CD8-positive, alpha-beta T cell (primary cell): ENCODE measurements at regions of chr7 and their contacts with region 1.

Region 1: DNA sequence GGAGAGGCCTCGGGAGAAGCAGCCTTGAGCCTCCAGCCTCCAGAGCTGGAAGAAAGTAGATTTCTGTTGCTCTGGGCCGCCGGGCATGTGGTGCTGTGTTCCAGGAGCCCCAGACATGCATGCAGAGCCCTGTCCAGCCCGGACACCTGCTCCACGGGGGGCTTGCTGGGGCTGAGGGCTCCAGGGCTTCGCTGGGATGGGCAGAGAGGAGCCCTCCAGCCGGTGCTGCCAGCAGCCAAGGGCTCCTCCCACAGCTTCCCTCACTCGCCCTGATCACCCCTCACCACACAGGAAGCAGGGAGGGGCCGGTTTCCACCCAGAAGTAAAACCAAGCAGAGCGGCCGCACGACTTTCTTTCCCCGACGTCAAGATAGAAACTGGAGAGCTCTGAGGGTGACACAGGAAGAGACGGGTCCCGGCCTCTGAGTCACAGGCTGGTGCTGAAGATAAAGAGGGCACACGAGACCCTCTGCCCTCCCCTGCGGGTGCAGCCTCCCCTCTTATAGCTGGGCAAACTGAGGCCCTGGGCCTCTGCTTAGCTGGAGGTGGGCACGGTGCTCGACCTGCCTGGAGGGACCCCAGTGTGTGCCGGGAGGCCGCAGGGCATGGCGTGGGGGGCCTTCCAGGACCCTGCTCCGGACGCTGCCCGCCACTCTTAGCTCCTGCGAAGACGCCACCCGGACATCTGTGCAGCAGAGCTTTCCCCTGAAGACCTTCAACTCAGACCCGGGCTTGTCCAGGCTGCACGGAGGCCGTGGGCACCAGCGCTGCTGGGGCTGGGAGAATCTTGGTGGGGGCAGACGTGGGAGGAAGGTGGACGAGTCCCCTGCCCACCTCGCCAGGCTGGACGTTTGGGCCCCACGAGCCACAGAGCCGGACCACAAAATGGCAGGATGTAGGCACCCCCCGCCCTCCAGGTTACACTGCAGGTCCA is 31.1 kb downstream of the ADAP1 start:
- DNase-seq: peak; percentile 82 to 97 (median 95)
- ATAC-seq: peak; percentile 72
- H3K4me3 ChIP-seq: peak overlapping the region; percentile 72 to 94
- H3K4me3 Mint-ChIP-seq: peak overlapping the region; percentile 86
- H3K27ac ChIP-seq: peak overlapping the region; percentile 83 to 87
- H3K27ac Mint-ChIP-seq: peak overlapping the region; percentile 95
- H3K4me1 ChIP-seq: peaks cover 50% of the 10 kb centered on the region
- H3K4me1 Mint-ChIP-seq: peaks cover 34% of the 10 kb centered on the region
- H3K27me3 ChIP-seq: no peaks in the 10 kb centered on the region
- H3K27me3 Mint-ChIP-seq: no peaks in the 10 kb centered on the region
- CTCF ChIP-seq: no peak

Region 2: GRCh38 chr7:816300-816750 is 107.0 kb before region 1 on chr7:
- CTCF ChIA-PET with region 1: no interaction called
- POLR2A ChIA-PET with region 1: interaction called, 3 read pairs
- intact Hi-C with region 1: loop called in 1 of 2 experiments (anchors 5 kb)
- DNase-seq: peak; percentile 93 to 98 (median 96)
- ATAC-seq: peak; percentile 94
- H3K4me3 ChIP-seq: peak overlapping the region; percentile 40 to 53
- H3K4me3 Mint-ChIP-seq: peak overlapping the region; percentile 61
- H3K27ac ChIP-seq: no peak overlapping the region
- H3K27ac Mint-ChIP-seq: no peak overlapping the region
- H3K4me1 ChIP-seq: peaks cover 34% of the 10 kb centered on the region
- H3K4me1 Mint-ChIP-seq: peaks cover 54% of the 10 kb centered on the region
- H3K27me3 ChIP-seq: no peaks in the 10 kb centered on the region
- H3K27me3 Mint-ChIP-seq: peaks cover 2% of the 10 kb centered on the region
- CTCF ChIP-seq: no peak

Region 3: DNA sequence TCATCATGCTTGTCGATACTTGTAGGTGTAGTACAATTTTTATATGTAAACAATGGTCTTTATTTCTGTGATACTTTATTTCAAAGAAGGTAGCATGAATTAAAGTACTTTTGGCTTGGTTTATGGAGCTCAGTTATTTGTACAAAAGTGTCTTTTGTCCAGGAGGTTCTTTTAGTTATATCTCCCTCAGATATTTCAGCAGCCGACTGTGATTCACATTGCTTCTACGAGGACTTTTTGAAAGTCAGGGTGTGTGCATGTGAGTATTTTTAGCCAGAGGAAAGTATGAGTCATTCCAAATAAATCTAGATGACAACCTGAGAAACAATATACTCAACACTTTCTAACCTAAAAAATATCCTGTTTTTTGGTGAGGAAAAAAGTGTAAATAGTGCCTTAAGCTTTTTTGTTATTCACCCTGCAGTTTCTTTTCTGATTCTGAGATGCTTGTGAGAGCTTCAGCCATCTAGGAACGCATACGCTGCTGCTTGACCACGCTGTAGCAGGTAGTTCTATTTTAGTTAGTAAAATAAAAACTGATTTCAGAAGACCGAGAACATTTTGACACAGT is 91.7 kb before region 1 on chr7:
- CTCF ChIA-PET with region 1: no interaction called
- POLR2A ChIA-PET with region 1: no interaction called
- intact Hi-C with region 1: loop called in 1 of 2 experiments (anchors 5 kb)
- DNase-seq: peak in 3 of 9 experiments; percentile 23 to 61 (median 30)
- ATAC-seq: peak; percentile 15
- H3K4me3 ChIP-seq: no peak overlapping the region
- H3K4me3 Mint-ChIP-seq: peak overlapping the region; percentile 75
- H3K27ac ChIP-seq: peak overlapping the region; percentile 66 to 75
- H3K27ac Mint-ChIP-seq: peak overlapping the region; percentile 92
- H3K4me1 ChIP-seq: peaks cover 27% of the 10 kb centered on the region
- H3K4me1 Mint-ChIP-seq: peaks cover 48% of the 10 kb centered on the region
- H3K27me3 ChIP-seq: no peaks in the 10 kb centered on the region
- H3K27me3 Mint-ChIP-seq: no peaks in the 10 kb centered on the region
- CTCF ChIP-seq: no peak

Region 4: GRCh38 chr7:909358-910329 is 13.7 kb before region 1 on chr7:
- CTCF ChIA-PET with region 1: interaction called, 8 read pairs
- POLR2A ChIA-PET with region 1: interaction called, 29 read pairs
- intact Hi-C with region 1: loop called in 1 of 2 experiments (anchors 1 kb)
- DNase-seq: peak in 6 of 9 experiments; percentile 30 to 64 (median 47)
- ATAC-seq: peak; percentile 19
- H3K4me3 ChIP-seq: peak overlapping the region in 1 of 2 experiments; percentile 48
- H3K4me3 Mint-ChIP-seq: peak overlapping the region; percentile 55
- H3K27ac ChIP-seq: no peak overlapping the region
- H3K27ac Mint-ChIP-seq: peak overlapping the region; percentile 75
- H3K4me1 ChIP-seq: peaks cover 15% of the 10 kb centered on the region
- H3K4me1 Mint-ChIP-seq: peaks cover 9% of the 10 kb centered on the region
- H3K27me3 ChIP-seq: no peaks in the 10 kb centered on the region
- H3K27me3 Mint-ChIP-seq: no peaks in the 10 kb centered on the region
- CTCF ChIP-seq: no peak

Region 5: GRCh38 chr7:954330-955238 is 31.2 kb after region 1 on chr7 and contains the start of gene ADAP1:
- CTCF ChIA-PET with region 1: no interaction called
- POLR2A ChIA-PET with region 1: interaction called, 16 read pairs
- intact Hi-C with region 1: loop called (anchors 1 to 2 kb)
- DNase-seq: peak in 8 of 9 experiments; percentile 45 to 87 (median 60)
- ATAC-seq: peak; percentile 83
- H3K4me3 ChIP-seq: peak within 1 kb of the TSS in 1 of 2 experiments; percentile 45
- H3K4me3 Mint-ChIP-seq: peak within 1 kb of the TSS; percentile 70
- H3K27ac ChIP-seq: no peak within 1 kb of the TSS
- H3K27ac Mint-ChIP-seq: peak within 1 kb of the TSS; percentile 70
- H3K4me1 ChIP-seq: no peaks in the 10 kb centered on the region
- H3K4me1 Mint-ChIP-seq: peaks cover 9% of the 10 kb centered on the region
- H3K27me3 ChIP-seq: no peaks in the 10 kb centered on the region
- H3K27me3 Mint-ChIP-seq: no peaks in the 10 kb centered on the region
- CTCF ChIP-seq: no peak
- total RNA-seq, gene ADAP1: 10.9 to 11.5 TPM